ENCODE measurements at regions of chr7 and their contacts with region 1.

Region 1: DNA sequence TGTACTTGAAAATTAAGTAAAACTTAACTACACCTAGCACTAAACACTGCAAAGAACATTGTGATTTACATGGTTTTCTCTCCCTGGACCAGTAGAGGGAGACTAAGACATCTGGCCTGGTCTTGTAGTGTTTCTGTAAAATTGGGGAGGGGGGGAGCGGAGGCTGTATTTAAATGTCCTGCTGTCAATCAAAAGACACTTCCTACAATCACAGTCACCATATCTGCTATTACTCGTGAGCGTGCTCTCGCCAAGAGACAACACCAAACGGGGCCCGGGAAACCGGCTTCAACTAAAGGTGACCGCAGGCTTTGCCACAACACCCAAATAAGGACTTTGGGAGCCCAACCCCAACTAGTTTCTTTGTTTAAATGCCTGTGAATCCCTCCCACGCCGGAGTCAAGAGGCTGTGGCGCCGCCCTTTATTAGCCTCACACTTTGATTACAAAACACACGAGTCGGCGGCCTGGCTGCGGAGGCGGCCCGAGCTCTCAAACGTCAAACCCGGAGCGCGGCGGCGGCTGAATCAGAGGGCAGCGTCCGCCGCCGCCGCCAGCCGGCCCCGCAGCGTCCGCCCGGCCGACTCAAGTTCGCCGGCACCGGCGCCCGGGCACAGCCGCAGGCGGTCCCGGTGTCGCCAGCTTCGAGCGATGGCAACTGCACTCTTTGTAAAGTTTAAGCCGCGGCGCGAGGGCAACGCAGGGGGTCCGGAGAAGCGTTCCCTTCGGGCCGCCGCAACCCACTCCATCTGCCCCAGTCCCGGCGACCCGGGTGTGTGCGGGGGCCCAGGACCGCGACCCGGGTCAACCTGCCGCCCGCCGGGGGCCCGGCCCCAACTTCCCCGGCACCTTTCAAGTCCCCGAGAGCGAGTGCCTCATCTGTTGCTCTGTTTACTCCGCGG is 1.3 kb downstream of the KDM7A start:
- DNase-seq: peak; percentile 77 to 98 (median 87)
- ATAC-seq: peak; percentile 67
- H3K4me3 ChIP-seq: peak overlapping the region; percentile 60
- H3K4me3 Mint-ChIP-seq: peak overlapping the region; percentile 93
- H3K27ac ChIP-seq: peak overlapping the region; percentile 76 to 94
- H3K27ac Mint-ChIP-seq: peak overlapping the region; percentile 84
- H3K4me1 ChIP-seq: peaks cover 30% of the 10 kb centered on the region
- H3K4me1 Mint-ChIP-seq: peaks cover 46% of the 10 kb centered on the region
- H3K27me3 ChIP-seq: no peaks in the 10 kb centered on the region
- H3K27me3 Mint-ChIP-seq: no peaks in the 10 kb centered on the region
- CTCF ChIP-seq: peak; percentile 84

Region 2: GRCh38 chr7:139645572-139646523 is 529.6 kb before region 1 on chr7:
- CTCF ChIA-PET with region 1: no interaction called
- POLR2A ChIA-PET with region 1: interaction called, 3 read pairs
- intact Hi-C with region 1: loop called in 1 of 2 experiments (anchors 5 kb)
- DNase-seq: peak; percentile 72 to 95 (median 81)
- ATAC-seq: peak; percentile 57
- H3K4me3 ChIP-seq: no peak overlapping the region
- H3K4me3 Mint-ChIP-seq: peak overlapping the region; percentile 32
- H3K27ac ChIP-seq: no peak overlapping the region
- H3K27ac Mint-ChIP-seq: peak overlapping the region; percentile 81
- H3K4me1 ChIP-seq: peaks cover 64% of the 10 kb centered on the region
- H3K4me1 Mint-ChIP-seq: peaks cover 84% of the 10 kb centered on the region
- H3K27me3 ChIP-seq: no peaks in the 10 kb centered on the region
- H3K27me3 Mint-ChIP-seq: no peaks in the 10 kb centered on the region
- CTCF ChIP-seq: peak; percentile 93

Region 3: DNA sequence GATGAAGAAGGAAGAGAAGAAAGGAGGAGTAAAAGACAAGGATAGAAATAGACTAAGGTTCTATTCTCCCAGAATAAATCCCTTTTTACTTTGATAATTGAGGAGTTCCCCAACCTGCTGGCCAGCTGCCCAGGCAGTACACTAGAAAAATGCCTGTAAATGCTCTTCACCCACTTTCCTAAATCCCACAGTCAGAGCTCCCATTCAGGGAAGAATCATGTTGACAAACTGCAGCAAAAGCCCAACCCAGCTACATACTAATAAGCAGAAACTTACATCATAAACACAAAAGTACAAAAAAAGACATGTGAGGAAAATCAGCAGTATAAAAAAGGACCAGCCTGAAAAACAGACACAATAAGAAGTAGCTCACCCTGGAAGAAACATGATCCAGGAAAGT is 17.1 kb after region 1 on chr7:
- CTCF ChIA-PET with region 1: no interaction called
- POLR2A ChIA-PET with region 1: interaction called, 24 read pairs
- intact Hi-C with region 1: no loop called
- DNase-seq: no peak
- ATAC-seq: no peak
- H3K4me3 ChIP-seq: no peak overlapping the region
- H3K4me3 Mint-ChIP-seq: no peak overlapping the region
- H3K27ac ChIP-seq: no peak overlapping the region
- H3K27ac Mint-ChIP-seq: no peak overlapping the region
- H3K4me1 ChIP-seq: peaks cover 4% of the 10 kb centered on the region
- H3K4me1 Mint-ChIP-seq: no peaks in the 10 kb centered on the region
- H3K27me3 ChIP-seq: no peaks in the 10 kb centered on the region
- H3K27me3 Mint-ChIP-seq: no peaks in the 10 kb centered on the region
- CTCF ChIP-seq: no peak

Region 4: GRCh38 chr7:140230861-140231770 is 55.6 kb after region 1 on chr7:
- CTCF ChIA-PET with region 1: interaction called, 5 read pairs
- POLR2A ChIA-PET with region 1: interaction called, 394 read pairs
- intact Hi-C with region 1: loop called (anchors 1 kb)
- DNase-seq: peak; percentile 23 to 80 (median 54)
- ATAC-seq: peak; percentile 17
- H3K4me3 ChIP-seq: peak overlapping the region; percentile 70
- H3K4me3 Mint-ChIP-seq: peak overlapping the region; percentile 88
- H3K27ac ChIP-seq: peak overlapping the region; percentile 84 to 97
- H3K27ac Mint-ChIP-seq: peak overlapping the region; percentile 99
- H3K4me1 ChIP-seq: peaks cover 44% of the 10 kb centered on the region
- H3K4me1 Mint-ChIP-seq: peaks cover 46% of the 10 kb centered on the region
- H3K27me3 ChIP-seq: no peaks in the 10 kb centered on the region
- H3K27me3 Mint-ChIP-seq: no peaks in the 10 kb centered on the region
- CTCF ChIP-seq: no peak

Region 5: DNA sequence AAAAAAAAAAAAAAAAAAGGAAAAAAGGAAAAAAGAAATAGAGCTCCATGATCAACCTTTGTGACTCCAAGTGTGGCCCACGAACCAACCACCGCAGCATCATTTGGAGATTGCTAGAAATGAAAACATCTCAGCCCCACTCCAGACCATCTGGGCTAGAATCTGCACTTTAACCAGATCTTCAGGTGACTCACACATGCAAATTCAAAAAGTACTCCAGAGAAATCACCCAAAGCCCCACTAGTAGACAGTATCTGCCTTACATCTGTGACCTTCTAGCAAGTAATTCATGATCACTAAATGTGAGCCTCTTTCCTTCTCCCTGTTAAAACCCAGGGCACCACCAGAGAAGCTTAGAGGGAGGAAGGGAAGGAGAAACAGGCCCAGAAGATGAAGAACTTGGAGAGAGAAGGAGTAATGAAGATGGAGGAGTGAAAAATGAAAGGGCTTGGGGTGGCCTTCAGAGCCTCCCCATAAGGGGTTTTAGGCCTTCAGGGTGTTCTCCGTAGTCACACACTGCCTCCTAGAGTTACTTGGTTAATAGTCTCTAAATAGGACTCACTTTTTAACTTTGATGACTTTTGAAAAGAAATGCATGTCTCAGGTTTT is 128.8 kb after region 1 on chr7:
- CTCF ChIA-PET with region 1: no interaction called
- POLR2A ChIA-PET with region 1: interaction called, 27 read pairs
- intact Hi-C with region 1: loop called (anchors 1 to 2 kb)
- DNase-seq: peak in 13 of 14 experiments; percentile 7 to 79 (median 34)
- ATAC-seq: peak; percentile 95
- H3K4me3 ChIP-seq: no peak overlapping the region
- H3K4me3 Mint-ChIP-seq: no peak overlapping the region
- H3K27ac ChIP-seq: no peak overlapping the region
- H3K27ac Mint-ChIP-seq: peak overlapping the region; percentile 21
- H3K4me1 ChIP-seq: peaks cover 4% of the 10 kb centered on the region
- H3K4me1 Mint-ChIP-seq: peaks cover 6% of the 10 kb centered on the region
- H3K27me3 ChIP-seq: no peaks in the 10 kb centered on the region
- H3K27me3 Mint-ChIP-seq: no peaks in the 10 kb centered on the region
- CTCF ChIP-seq: peak; percentile 66

Region 6: DNA sequence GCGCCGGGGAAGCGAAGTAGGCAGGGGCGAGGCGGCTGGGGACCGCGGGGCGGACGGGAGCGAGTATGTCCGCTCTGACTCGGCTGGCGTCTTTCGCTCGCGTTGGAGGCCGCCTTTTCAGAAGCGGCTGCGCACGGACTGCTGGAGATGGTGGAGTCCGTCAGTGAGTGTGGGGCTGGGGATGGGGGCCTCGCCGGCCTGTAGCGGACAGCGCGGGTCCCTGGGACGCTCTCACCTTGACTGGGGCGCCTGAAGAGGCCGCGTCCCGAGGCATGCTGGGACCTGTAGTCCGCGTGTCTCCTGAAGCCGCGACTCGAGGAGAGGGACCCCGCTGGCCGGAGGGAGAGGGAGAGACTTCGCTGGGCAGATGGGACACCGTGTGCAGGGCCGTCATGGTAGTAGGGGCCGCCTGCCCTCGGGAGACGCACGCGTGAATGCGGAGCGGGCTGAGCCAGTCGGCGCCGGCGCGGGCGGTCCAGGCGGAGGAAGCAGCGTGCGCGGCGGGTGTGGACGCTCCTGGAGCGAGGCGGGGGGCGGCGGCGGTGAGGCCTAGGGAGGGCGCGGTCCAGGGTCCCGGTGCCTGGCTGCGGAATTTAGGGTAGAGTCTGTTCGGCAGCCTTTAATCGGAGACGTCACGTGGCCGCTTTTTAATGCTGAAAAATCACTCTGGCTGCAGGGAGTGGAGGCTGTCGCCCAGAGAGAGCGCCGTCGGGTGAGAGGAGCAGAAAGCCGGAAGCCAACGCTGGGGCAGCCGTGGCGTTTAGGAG is 521.4 kb after region 1 on chr7 and contains the start of gene NDUFB2:
- CTCF ChIA-PET with region 1: no interaction called
- POLR2A ChIA-PET with region 1: no interaction called
- intact Hi-C with region 1: loop called in 1 of 2 experiments (anchors 10 kb)
- DNase-seq: peak; percentile 43 to 86 (median 58)
- ATAC-seq: peak; percentile 75
- H3K4me3 ChIP-seq: peak within 1 kb of the TSS; percentile 97
- H3K4me3 Mint-ChIP-seq: peak within 1 kb of the TSS; percentile 100
- H3K27ac ChIP-seq: peak within 1 kb of the TSS; percentile 91 to 96
- H3K27ac Mint-ChIP-seq: peak within 1 kb of the TSS; percentile 100
- H3K4me1 ChIP-seq: peaks cover 33% of the 10 kb centered on the region
- H3K4me1 Mint-ChIP-seq: peaks cover 38% of the 10 kb centered on the region
- H3K27me3 ChIP-seq: no peaks in the 10 kb centered on the region
- H3K27me3 Mint-ChIP-seq: no peaks in the 10 kb centered on the region
- CTCF ChIP-seq: no peak
- total RNA-seq, gene NDUFB2: 73.7 to 84.4 TPM

Measured in CD4-positive, alpha-beta T cell (primary cell).